Activated naive CD4-positive, alpha-beta T cell treated with anti-CD3 and anti-CD28 coated beads for 36 hours (primary cell): ENCODE measurements at regions of chr15 and their contacts with region 1.

Region 1: GRCh38 chr15:55290528-55291057 is 980 bp upstream of the RAB27A start:
- DNase-seq: peak; percentile 90
- H3K4me3 Mint-ChIP-seq: peak overlapping the region; percentile 80
- H3K27ac Mint-ChIP-seq: peak overlapping the region; percentile 91
- H3K4me1 Mint-ChIP-seq: peaks cover 29% of the 10 kb centered on the region
- H3K27me3 Mint-ChIP-seq: no peaks in the 10 kb centered on the region

Region 2: GRCh38 chr15:53962332-53963241 is 1328.0 kb before region 1 on chr15:
- CTCF ChIA-PET with region 1: no interaction called
- intact Hi-C with region 1: loop called (anchors 1 kb)
- DNase-seq: peak; percentile 56
- H3K4me3 Mint-ChIP-seq: no peak overlapping the region
- H3K27ac Mint-ChIP-seq: no peak overlapping the region
- H3K4me1 Mint-ChIP-seq: no peaks in the 10 kb centered on the region
- H3K27me3 Mint-ChIP-seq: peaks cover 9% of the 10 kb centered on the region

Region 3: GRCh38 chr15:55084216-55084615 is 206.4 kb before region 1 on chr15:
- CTCF ChIA-PET with region 1: no interaction called
- intact Hi-C with region 1: no loop called
- DNase-seq: no peak
- H3K4me3 Mint-ChIP-seq: no peak overlapping the region
- H3K27ac Mint-ChIP-seq: no peak overlapping the region
- H3K4me1 Mint-ChIP-seq: peaks cover 3% of the 10 kb centered on the region
- H3K27me3 Mint-ChIP-seq: peaks cover 5% of the 10 kb centered on the region

Region 4: GRCh38 chr15:55196458-55197361 is 93.9 kb before region 1 on chr15 and contains the start of gene RSL24D1:
- CTCF ChIA-PET with region 1: interaction called, 12 read pairs
- intact Hi-C with region 1: loop called (anchors 1 kb)
- DNase-seq: peak; percentile 98
- H3K4me3 Mint-ChIP-seq: no peak within 1 kb of the TSS
- H3K27ac Mint-ChIP-seq: no peak within 1 kb of the TSS
- H3K4me1 Mint-ChIP-seq: peaks cover 16% of the 10 kb centered on the region
- H3K27me3 Mint-ChIP-seq: no peaks in the 10 kb centered on the region
- total RNA-seq, gene RSL24D1: 201 to 209 TPM

Region 5: GRCh38 chr15:55255714-55256113 is 34.9 kb before region 1 on chr15:
- CTCF ChIA-PET with region 1: no interaction called
- intact Hi-C with region 1: loop called (anchors 2 kb)
- DNase-seq: no peak
- H3K4me3 Mint-ChIP-seq: peak overlapping the region; percentile 61
- H3K27ac Mint-ChIP-seq: peak overlapping the region; percentile 82
- H3K4me1 Mint-ChIP-seq: peaks cover 73% of the 10 kb centered on the region
- H3K27me3 Mint-ChIP-seq: no peaks in the 10 kb centered on the region

Region 6: DNA sequence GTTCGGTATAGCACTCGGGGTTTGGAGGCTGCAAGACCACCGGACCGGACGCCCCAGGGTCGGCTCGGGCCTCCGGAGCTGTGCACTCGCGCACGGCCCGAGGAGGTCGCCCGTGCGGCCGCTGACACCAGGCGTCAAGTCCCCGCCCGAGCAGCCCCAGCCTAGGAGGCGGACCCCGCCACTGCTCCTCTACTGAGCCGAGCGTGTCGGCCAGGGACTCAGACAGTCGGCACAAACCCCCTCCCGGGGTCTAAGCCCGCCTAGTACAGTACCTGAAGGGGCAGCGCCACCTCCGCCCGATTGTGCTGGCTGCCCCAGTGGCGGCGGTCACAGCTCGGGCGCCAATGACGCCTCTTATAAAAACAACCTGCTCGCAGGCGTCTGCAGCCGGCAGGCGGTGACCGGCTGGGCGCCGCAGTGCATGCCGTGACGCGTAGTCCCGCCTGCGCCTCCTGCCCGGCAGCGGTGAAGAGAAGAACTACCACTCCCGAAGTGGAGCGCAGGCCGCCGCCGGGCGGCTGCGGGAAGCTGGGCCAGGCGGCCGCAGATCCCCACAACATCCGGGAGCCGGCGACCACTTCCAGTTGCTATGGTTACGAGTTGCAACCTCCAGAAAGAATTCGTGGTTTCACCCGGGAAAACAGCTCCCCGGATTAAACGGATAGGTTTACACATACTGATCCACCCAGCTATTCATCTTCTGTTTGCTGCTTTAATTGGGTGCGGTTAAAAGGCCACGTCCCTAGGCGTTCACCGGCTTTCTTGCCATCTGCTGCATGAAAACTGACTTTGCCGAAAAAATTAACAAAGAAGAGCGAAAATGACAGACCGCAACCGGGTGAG is 117.6 kb after region 1 on chr15 and contains the starts of genes CCPG1 and PIERCE2:
- CTCF ChIA-PET with region 1: no interaction called
- intact Hi-C with region 1: loop called (anchors 1 kb)
- DNase-seq: peak; percentile 90
- H3K4me3 Mint-ChIP-seq: peak within 1 kb of the TSS; percentile 82
- H3K27ac Mint-ChIP-seq: peak within 1 kb of the TSS; percentile 68
- H3K4me1 Mint-ChIP-seq: peaks cover 24% of the 10 kb centered on the region
- H3K27me3 Mint-ChIP-seq: no peaks in the 10 kb centered on the region
- total RNA-seq, gene CCPG1: 9.8 to 11.6 TPM
- total RNA-seq, gene PIERCE2: 0.38 to 0.44 TPM